GM12878 (cell line): ENCODE measurements at regions of chr6 and their contacts with region 1.

Region 1: DNA sequence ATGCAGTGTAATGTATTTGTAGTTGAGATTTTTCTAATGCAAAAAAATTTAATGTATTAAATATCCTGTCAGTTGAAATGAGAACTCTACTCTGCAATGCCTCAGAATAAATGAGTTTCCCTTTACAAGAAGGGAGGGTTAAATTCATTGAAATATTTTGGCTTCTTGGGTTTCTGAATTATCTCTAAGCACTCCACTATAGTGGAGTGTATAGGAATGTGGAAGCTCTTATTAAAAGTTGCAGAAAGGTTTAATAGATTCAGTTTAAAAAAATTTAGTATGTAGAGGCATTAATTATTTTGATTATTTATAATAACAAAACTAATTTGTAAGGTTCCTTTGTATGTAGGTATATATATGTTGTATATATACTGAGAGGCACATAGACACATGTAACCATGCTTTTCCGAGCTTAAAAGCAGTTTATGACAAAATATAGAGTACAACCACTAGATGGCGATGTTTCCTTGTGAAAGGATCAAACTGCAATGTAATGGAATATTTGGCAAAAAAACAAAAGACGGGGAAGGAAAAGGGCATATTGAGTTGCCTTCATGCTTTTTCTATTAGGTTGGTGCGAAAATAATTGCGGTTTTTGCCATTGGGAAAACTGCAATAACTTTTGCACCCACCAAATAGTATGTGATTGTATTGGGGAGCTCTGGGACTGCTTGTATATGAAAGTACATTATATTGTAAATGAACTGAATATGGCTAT is 144.2 kb downstream of the MYO6 start:
- DNase-seq: peak; percentile 19
- ATAC-seq: peak; percentile 85
- H3K4me3 ChIP-seq: no peak overlapping the region
- H3K27ac ChIP-seq: no peak overlapping the region
- H3K4me1 ChIP-seq: no peaks in the 10 kb centered on the region
- H3K27me3 ChIP-seq: no peaks in the 10 kb centered on the region
- CTCF ChIP-seq: peak; percentile 57 to 65 (median 65)
- EP300 ChIP-seq: no peak
- POLR2A ChIP-seq: no peak
- RAD21 ChIP-seq: peak; percentile 81

Region 2: GRCh38 chr6:75711173-75711572 is 182.0 kb before region 1 on chr6:
- CTCF ChIA-PET with region 1: interaction called, 13 read pairs
- POLR2A ChIA-PET with region 1: no interaction called
- RAD21 ChIA-PET with region 1: no interaction called
- SMC1A ChIA-PET with region 1: no interaction called
- in situ Hi-C with region 1: no loop called
- intact Hi-C with region 1: no loop called
- DNase-seq: no peak
- ATAC-seq: no peak
- H3K4me3 ChIP-seq: no peak overlapping the region
- H3K27ac ChIP-seq: no peak overlapping the region
- H3K4me1 ChIP-seq: no peaks in the 10 kb centered on the region
- H3K27me3 ChIP-seq: no peaks in the 10 kb centered on the region
- CTCF ChIP-seq: no peak
- EP300 ChIP-seq: no peak
- POLR2A ChIP-seq: no peak
- RAD21 ChIP-seq: no peak

Region 3: DNA sequence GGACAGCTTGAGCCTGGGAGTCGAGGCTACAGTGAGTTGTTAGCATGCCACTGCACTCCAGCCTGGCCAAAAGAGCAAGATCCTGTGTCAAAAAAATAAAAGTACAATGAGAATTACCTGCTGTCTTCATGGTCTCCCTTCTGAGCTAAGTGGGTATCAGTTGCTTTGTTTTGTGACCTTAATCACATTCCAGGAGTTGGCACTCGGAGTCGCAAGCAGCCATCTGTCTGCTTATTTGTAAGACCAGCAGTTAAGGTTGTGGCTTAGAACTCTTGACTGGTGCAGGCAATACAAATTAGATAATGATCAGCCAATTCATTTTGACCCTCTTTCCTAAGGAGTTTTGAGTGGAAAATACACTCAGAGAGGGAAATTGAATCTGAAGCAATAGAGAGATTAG is 30.2 kb before region 1 on chr6:
- CTCF ChIA-PET with region 1: interaction called, 50 read pairs
- POLR2A ChIA-PET with region 1: interaction called, 3 read pairs
- RAD21 ChIA-PET with region 1: no interaction called
- SMC1A ChIA-PET with region 1: interaction called, 4 read pairs
- in situ Hi-C with region 1: no loop called
- intact Hi-C with region 1: no loop called
- DNase-seq: no peak
- ATAC-seq: no peak
- H3K4me3 ChIP-seq: no peak overlapping the region
- H3K27ac ChIP-seq: no peak overlapping the region
- H3K4me1 ChIP-seq: no peaks in the 10 kb centered on the region
- H3K27me3 ChIP-seq: no peaks in the 10 kb centered on the region
- CTCF ChIP-seq: no peak
- EP300 ChIP-seq: no peak
- POLR2A ChIP-seq: no peak
- RAD21 ChIP-seq: no peak

Region 4: GRCh38 chr6:75906871-75907270 is 13.7 kb after region 1 on chr6:
- CTCF ChIA-PET with region 1: interaction called, 105 read pairs
- POLR2A ChIA-PET with region 1: interaction called, 3 read pairs
- RAD21 ChIA-PET with region 1: interaction called, 5 read pairs
- SMC1A ChIA-PET with region 1: interaction called, 24 read pairs
- in situ Hi-C with region 1: no loop called
- intact Hi-C with region 1: no loop called
- DNase-seq: no peak
- ATAC-seq: no peak
- H3K4me3 ChIP-seq: no peak overlapping the region
- H3K27ac ChIP-seq: no peak overlapping the region
- H3K4me1 ChIP-seq: no peaks in the 10 kb centered on the region
- H3K27me3 ChIP-seq: no peaks in the 10 kb centered on the region
- CTCF ChIP-seq: no peak
- EP300 ChIP-seq: no peak
- POLR2A ChIP-seq: no peak
- RAD21 ChIP-seq: no peak

Region 5: GRCh38 chr6:75934643-75935472 is 41.6 kb after region 1 on chr6:
- CTCF ChIA-PET with region 1: interaction called, 75 read pairs
- POLR2A ChIA-PET with region 1: no interaction called
- RAD21 ChIA-PET with region 1: interaction called, 13 read pairs
- SMC1A ChIA-PET with region 1: interaction called, 4 read pairs
- in situ Hi-C with region 1: no loop called
- intact Hi-C with region 1: no loop called
- DNase-seq: peak; percentile 16
- ATAC-seq: peak; percentile 86
- H3K4me3 ChIP-seq: peak overlapping the region; percentile 14; the same call in 1 of the 2 replicates
- H3K27ac ChIP-seq: no peak overlapping the region
- H3K4me1 ChIP-seq: no peaks in the 10 kb centered on the region; the same call in 1 of the 2 replicates
- H3K27me3 ChIP-seq: peaks cover 0 to 2% of the 10 kb centered on the region in 2 experiments; a peak in 1 of 4 replicates
- CTCF ChIP-seq: peak; percentile 74 to 84 (median 76)
- EP300 ChIP-seq: no peak
- POLR2A ChIP-seq: no peak
- RAD21 ChIP-seq: peak; percentile 84

Region 6: GRCh38 chr6:76351275-76351674 is 458.1 kb after region 1 on chr6:
- CTCF ChIA-PET with region 1: interaction called, 14 read pairs
- POLR2A ChIA-PET with region 1: no interaction called
- RAD21 ChIA-PET with region 1: no interaction called
- SMC1A ChIA-PET with region 1: no interaction called
- in situ Hi-C with region 1: no loop called
- intact Hi-C with region 1: no loop called
- DNase-seq: no peak
- ATAC-seq: peak; percentile 54
- H3K4me3 ChIP-seq: no peak overlapping the region
- H3K27ac ChIP-seq: no peak overlapping the region
- H3K4me1 ChIP-seq: no peaks in the 10 kb centered on the region
- H3K27me3 ChIP-seq: no peaks in the 10 kb centered on the region
- CTCF ChIP-seq: peak; percentile 11 to 33 (median 31); a peak in 2 of 6 replicates
- EP300 ChIP-seq: no peak
- POLR2A ChIP-seq: no peak
- RAD21 ChIP-seq: peak; percentile 35; the same call in 1 of the 2 replicates